Activated CD8-positive, alpha-beta memory T cell treated with anti-CD3 and anti-CD28 coated beads, Interleukin-2, amount 10 ng/mL, durations not matched to agents 7 days and 5 days (primary cell): ENCODE measurements at regions of chr4 and their contacts with region 1.

Region 1: DNA sequence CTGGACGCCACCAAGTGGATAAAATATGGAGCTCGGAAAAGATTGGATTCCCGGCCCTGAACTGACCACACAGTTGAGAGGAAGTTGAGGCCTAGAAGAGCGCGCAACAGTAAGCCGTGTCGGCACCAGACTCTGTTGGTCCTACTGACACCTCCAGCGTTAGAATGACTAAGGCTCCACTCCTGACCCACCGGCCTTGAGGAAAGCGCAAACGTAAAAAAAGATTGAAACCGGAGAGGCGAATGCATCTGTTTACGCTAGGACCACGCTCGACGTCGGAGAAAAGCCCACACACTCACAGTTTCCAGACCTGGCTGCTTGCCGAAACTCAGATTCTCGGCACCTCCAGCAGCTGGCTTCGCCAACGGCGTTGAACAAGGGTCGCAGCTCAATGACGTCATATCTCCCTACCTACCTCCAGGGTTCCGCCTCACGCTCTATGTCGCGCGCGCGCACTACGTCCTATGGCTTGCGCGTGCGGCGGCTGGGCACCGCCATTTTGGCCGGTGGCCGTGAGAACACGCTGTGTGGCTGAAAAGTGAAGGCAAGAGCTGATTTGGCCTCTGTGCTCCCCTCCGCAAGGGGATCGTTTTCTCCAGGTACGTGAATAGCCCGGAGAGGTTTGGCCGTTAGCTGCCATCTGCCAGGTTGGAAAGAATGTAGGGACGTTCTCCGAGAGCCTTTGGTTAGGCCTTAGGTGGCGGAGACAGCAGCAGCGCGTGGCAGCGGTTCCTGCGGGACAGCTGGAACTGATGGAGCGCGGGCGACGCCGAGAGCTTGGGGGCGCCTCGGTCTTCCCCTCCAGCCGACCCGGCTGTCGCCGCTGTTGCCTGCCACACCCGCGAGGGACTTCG is at the starts of genes ABCE1 and ANAPC10:
- DNase-seq: peak; percentile 98
- ATAC-seq: peak; percentile 90
- H3K4me3 Mint-ChIP-seq: peak within 1 kb of the TSS; percentile 84
- H3K27ac Mint-ChIP-seq: peak within 1 kb of the TSS; percentile 92
- H3K4me1 Mint-ChIP-seq: peaks cover 29% of the 10 kb centered on the region
- H3K27me3 Mint-ChIP-seq: no peaks in the 10 kb centered on the region
- total RNA-seq, gene ABCE1: 64.7 to 97.4 TPM
- total RNA-seq, gene ANAPC10: 26.2 to 28.5 TPM

Region 2: GRCh38 chr4:145179281-145179860 is 81.3 kb after region 1 on chr4:
- CTCF ChIA-PET with region 1: interaction called, 17 read pairs
- DNase-seq: peak; percentile 90
- ATAC-seq: peak; percentile 53
- H3K4me3 Mint-ChIP-seq: peak overlapping the region; percentile 93
- H3K27ac Mint-ChIP-seq: peak overlapping the region; percentile 97
- H3K4me1 Mint-ChIP-seq: peaks cover 36% of the 10 kb centered on the region
- H3K27me3 Mint-ChIP-seq: no peaks in the 10 kb centered on the region